ENCODE measurements at regions of chr15 and their contacts with region 1.

Region 1: GRCh38 chr15:86885616-86886015 is 805.9 kb downstream of the AGBL1 start:
- DNase-seq: no peak

Region 2: GRCh38 chr15:86316726-86317383 is 568.8 kb before region 1 on chr15:
- intact Hi-C with region 1: no loop called
- DNase-seq: no peak

Region 3: GRCh38 chr15:86611417-86612040 is 274.1 kb before region 1 on chr15:
- intact Hi-C with region 1: no loop called
- DNase-seq: no peak

Region 4: DNA sequence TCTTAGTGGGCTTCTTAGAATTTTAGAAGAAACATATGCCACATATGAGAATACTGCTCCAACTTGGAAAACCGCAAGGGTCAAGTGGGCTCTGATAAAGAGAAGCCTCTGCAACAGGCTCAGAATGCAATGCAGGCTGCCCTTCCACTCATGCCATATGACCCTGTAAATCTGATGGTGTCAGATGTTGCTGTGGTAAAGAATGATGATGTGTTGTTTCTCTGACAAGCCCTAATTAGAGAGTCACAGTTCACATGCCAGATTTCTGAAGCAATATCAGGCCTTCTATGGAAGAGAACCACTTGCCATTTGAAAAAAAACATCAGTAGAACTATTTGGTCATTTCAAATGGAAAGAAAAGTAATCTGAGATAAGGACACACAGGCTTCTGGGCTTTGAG is 56.4 kb before region 1 on chr15:
- intact Hi-C with region 1: loop called in 1 of 2 experiments (anchors 2 kb)
- DNase-seq: no peak

Region 5: GRCh38 chr15:87224404-87224803 is 338.8 kb after region 1 on chr15:
- intact Hi-C with region 1: no loop called
- DNase-seq: no peak